Activated CD4-positive, alpha-beta memory T cell treated with anti-CD3 and anti-CD28 coated beads for 36 hours (primary cell): ENCODE measurements at regions of chr5 and their contacts with region 1.

Region 1: DNA sequence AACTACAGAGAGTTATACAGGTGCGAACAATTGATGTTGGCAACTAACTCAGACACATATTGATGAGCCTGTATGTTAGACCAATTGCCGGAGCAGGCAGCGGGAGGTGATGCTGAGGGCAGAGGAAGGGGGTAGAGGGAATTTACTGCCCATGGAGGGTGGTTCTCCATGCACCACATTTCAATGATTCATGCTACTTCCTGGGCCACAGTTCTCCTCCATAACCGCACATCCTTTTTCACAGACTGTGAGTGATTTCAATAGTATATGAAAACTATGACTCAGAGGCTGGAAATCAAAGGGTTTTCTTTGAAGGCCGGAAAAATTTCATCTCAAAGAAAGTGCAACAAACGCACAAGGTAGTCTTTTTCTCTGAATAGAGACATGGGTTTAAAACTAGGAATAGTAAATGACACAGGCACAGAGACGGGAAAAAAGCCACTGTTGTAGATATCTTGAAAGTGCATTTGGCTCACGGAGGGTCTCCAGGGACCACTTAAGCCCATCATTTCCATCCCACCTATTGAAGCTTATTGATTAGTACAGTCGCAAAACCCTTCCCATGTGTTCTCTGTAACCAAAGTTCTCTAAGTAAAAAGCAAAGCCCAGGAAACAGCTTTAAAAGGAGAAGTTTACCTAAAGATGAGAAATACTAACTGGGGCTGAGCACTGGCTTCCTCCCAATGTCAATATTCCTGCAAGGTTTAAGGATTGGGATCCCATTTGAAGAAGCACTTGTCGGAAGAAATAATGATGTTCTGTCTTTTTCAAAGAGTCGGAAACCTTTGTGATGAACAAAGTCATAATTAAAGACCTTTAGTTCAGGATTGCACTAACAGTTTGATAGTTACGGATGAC is 28.0 kb upstream of the ADAM19 start:
- DNase-seq: peak; percentile 83
- H3K4me3 Mint-ChIP-seq: peak overlapping the region; percentile 18
- H3K27ac Mint-ChIP-seq: peak overlapping the region; percentile 90
- H3K4me1 Mint-ChIP-seq: peaks cover 93% of the 10 kb centered on the region
- H3K27me3 Mint-ChIP-seq: no peaks in the 10 kb centered on the region

Region 2: GRCh38 chr5:157172403-157172802 is 431.2 kb before region 1 on chr5:
- CTCF ChIA-PET with region 1: no interaction called
- POLR2A ChIA-PET with region 1: no interaction called
- intact Hi-C with region 1: loop called (anchors 5 kb)
- DNase-seq: peak; percentile 96
- H3K4me3 Mint-ChIP-seq: peak overlapping the region; percentile 68
- H3K27ac Mint-ChIP-seq: peak overlapping the region; percentile 95
- H3K4me1 Mint-ChIP-seq: peaks cover 83% of the 10 kb centered on the region
- H3K27me3 Mint-ChIP-seq: no peaks in the 10 kb centered on the region

Region 3: GRCh38 chr5:157575381-157576020 is 28.1 kb before region 1 on chr5 and contains the start of gene ADAM19:
- CTCF ChIA-PET with region 1: interaction called, 3 read pairs
- POLR2A ChIA-PET with region 1: interaction called, 12 read pairs
- intact Hi-C with region 1: loop called (anchors 1 kb)
- DNase-seq: peak; percentile 67
- H3K4me3 Mint-ChIP-seq: peak within 1 kb of the TSS; percentile 92
- H3K27ac Mint-ChIP-seq: peak within 1 kb of the TSS; percentile 87
- H3K4me1 Mint-ChIP-seq: peaks cover 60% of the 10 kb centered on the region
- H3K27me3 Mint-ChIP-seq: no peaks in the 10 kb centered on the region
- total RNA-seq, gene ADAM19: 107 to 111 TPM

Region 4: DNA sequence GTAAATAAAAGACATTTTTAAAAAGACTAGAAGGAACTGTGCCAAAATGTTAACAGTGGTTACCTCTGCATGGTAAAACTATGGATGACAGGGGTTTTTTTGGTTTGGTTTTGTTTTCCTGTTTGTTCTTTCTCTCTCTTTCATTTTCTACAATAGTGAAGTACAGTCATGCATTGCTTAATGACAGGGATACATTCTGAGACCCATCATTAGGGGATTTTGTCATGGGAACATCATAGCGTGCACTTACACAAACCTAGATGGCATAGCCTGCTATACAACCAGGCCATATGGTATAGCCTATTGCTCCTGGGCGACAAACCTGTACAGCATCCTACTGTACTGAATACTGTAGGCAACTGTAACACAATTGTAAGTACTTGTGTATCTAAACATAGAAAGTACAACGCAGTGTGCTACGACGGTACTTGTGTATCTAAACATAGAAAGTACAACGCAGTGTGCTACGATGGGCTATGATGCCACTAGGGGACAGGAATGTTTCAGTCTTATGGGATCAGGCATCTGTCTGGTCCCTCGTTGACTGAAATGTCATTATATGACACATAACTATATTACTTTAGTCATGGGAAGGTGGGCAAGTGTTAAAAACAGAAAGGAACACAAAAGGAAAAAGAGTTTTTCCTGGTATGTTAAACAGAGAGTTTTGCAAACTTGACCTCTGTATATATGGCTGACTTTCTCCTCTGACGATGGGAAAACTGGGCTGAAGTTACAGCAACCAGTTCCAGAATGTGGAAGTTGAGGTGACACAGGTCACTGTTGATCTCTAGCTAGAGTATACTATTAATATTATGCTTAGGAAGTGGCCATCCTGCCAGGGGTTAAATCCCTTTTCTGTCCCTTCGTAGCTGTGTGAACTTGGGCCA is 20.6 kb before region 1 on chr5:
- CTCF ChIA-PET with region 1: no interaction called
- POLR2A ChIA-PET with region 1: interaction called, 3 read pairs
- intact Hi-C with region 1: loop called (anchors 1 kb)
- DNase-seq: no peak
- H3K4me3 Mint-ChIP-seq: no peak overlapping the region
- H3K27ac Mint-ChIP-seq: peak overlapping the region; percentile 72
- H3K4me1 Mint-ChIP-seq: peaks cover 50% of the 10 kb centered on the region
- H3K27me3 Mint-ChIP-seq: no peaks in the 10 kb centered on the region

Region 5: DNA sequence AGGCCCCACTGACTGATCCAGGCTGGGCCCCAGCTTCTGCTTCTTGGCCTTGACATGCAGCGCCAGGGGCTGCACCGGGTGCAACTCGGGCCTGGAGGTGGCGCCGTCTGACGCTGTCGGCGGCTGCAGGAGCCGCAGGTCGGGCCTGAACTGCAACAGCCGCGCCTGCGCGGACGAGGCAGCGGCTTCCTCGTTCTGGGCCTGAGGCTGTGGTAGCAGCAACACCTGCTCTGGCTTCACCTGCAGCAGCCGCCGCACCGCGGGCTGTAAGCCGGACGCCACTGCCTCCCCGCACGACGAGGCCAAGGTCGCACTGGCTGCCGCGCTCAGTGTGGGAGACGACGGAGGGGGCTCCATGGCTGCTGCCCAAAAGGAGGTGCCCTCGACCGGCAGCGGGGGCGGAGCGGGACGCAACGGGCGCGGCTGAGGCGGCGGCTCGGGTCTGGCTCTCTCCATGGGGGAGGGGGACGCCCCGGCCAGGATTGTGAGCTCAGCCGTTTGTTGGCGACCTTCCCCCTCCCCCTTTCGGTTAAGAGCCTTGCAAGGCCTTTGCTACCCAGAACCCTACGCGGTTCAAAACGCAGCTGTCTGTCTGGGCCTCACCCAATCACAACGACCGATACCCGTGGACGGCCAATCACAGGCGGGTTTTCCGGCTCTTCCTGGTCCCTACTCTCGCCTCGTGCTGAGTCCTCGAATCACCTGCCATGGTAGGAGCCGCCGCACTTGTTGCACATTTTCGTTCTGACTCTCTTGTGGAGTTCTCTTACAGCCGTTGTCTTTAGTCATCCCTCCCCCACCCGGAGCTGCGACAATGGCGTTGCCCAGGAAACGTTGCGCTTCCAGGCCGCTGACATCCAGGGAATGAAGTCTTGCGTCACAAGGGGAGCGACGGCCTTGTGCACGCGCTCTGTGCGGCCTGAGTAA is 48.3 kb after region 1 on chr5 and contains the start of gene SOX30:
- CTCF ChIA-PET with region 1: interaction called, 3 read pairs
- POLR2A ChIA-PET with region 1: no interaction called
- intact Hi-C with region 1: loop called (anchors 2 kb)
- DNase-seq: peak; percentile 91
- H3K4me3 Mint-ChIP-seq: peak within 1 kb of the TSS; percentile 76
- H3K27ac Mint-ChIP-seq: peak within 1 kb of the TSS; percentile 79
- H3K4me1 Mint-ChIP-seq: peaks cover 17% of the 10 kb centered on the region
- H3K27me3 Mint-ChIP-seq: no peaks in the 10 kb centered on the region
- total RNA-seq, gene SOX30: 0.65 to 0.93 TPM

Region 6: GRCh38 chr5:157731272-157732129 is 127.9 kb after region 1 on chr5 and contains the start of gene THG1L:
- CTCF ChIA-PET with region 1: no interaction called
- POLR2A ChIA-PET with region 1: no interaction called
- intact Hi-C with region 1: loop called (anchors 1 kb)
- DNase-seq: peak; percentile 100
- H3K4me3 Mint-ChIP-seq: peak within 1 kb of the TSS; percentile 95
- H3K27ac Mint-ChIP-seq: peak within 1 kb of the TSS; percentile 97
- H3K4me1 Mint-ChIP-seq: peaks cover 33% of the 10 kb centered on the region
- H3K27me3 Mint-ChIP-seq: no peaks in the 10 kb centered on the region
- total RNA-seq, gene THG1L: 28.6 to 33.5 TPM

Region 7: DNA sequence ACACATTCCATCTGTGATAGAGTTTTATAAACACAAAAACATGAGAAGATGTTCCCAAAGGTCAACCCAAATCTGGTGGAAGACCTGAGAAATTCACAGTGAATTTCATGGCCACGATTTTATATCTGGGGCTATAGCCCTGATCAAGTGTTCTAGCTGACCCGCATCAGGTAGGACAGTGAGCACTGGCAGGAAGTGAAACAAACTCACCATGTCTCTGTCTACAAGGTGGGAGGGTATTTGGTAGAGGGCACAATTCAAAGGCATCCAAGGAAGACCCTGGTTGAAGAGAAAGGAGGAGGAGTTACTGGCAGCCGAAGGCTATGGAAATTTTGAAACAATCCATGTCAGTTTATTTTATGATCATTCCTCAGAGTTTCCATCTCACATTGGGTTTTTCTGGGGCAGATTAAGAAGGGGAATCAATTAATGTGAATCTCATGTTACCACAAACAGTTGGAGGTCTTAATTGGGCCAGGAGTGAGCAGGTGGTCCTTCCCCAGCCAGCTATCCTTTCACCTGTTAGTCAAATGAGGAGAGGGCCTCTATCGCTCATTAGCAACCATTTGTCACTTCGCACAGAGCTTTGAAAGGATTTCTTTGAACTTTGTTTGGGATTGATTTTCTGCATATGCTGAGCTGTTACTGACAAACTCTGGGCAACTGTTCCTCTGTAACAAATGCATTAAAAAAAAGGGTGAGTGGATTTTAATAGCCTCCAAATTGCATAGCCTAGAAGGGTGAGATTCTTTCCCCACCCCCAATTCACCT is 867.4 kb after region 1 on chr5:
- CTCF ChIA-PET with region 1: no interaction called
- POLR2A ChIA-PET with region 1: no interaction called
- intact Hi-C with region 1: no loop called
- DNase-seq: no peak
- H3K4me3 Mint-ChIP-seq: no peak overlapping the region
- H3K27ac Mint-ChIP-seq: no peak overlapping the region
- H3K4me1 Mint-ChIP-seq: no peaks in the 10 kb centered on the region
- H3K27me3 Mint-ChIP-seq: no peaks in the 10 kb centered on the region